Activated naive CD4-positive, alpha-beta T cell treated with anti-CD3 and anti-CD28 coated beads, Interleukin-2, amount 10 ng/mL, durations not matched to agents 7 days and 5 days (primary cell): ENCODE measurements at regions of chr7 and their contacts with region 1.

Region 1: DNA sequence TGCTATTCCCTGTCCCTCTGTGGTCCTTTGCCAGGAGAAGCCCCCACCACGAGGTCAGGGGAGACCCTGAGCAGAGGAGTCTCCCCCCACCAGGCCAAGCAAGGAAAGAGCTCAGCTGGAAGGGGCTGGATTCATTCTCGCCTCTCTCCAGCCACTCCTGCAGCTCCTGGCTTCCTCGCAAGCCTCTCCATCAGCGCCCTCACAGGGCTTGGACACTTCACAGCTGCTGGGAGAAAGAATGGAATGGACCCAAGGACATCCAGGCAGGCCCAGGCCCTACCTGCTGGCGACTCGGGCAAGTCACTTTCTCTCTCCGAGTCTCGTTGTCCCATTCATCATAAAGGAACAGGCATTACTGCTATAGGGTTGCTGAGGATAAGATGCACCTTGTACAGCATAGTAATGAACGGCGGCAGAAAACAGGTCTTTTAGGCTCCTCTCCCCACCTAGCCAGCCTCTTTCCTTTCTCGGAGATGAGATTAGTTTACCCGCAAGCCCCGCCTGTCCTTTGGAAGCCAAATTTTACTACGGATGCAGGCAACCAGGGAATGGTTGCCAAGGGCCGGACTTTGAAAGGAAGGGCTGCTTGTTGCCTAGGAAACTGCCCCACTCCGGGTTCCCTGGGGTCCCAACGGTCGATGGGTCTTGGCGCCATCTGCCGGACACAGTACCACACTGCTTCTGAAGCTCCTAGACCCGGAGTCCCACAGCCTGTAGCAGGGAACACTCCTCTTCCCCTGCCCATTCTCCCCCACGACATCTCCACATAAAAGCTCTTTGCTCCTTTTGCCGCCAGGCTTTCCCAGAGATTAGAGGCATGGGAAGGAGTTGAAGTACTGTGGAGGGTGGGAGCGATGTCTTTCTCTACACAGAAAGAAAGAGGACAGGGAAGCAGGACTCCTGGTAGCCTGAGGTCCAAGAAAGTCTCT is 22.3 kb downstream of the IMPDH1 start:
- DNase-seq: peak; percentile 78
- H3K4me3 Mint-ChIP-seq: no peak overlapping the region
- H3K27ac Mint-ChIP-seq: no peak overlapping the region
- H3K4me1 Mint-ChIP-seq: no peaks in the 10 kb centered on the region
- H3K27me3 Mint-ChIP-seq: peaks cover 42% of the 10 kb centered on the region

Region 2: GRCh38 chr7:128343554-128344430 is 43.7 kb before region 1 on chr7 and contains the start of gene RBM28:
- CTCF ChIA-PET with region 1: interaction called, 183 read pairs
- DNase-seq: peak; percentile 90
- H3K4me3 Mint-ChIP-seq: peak within 1 kb of the TSS; percentile 88
- H3K27ac Mint-ChIP-seq: peak within 1 kb of the TSS; percentile 92
- H3K4me1 Mint-ChIP-seq: peaks cover 26% of the 10 kb centered on the region
- H3K27me3 Mint-ChIP-seq: peaks cover 11% of the 10 kb centered on the region

Region 3: DNA sequence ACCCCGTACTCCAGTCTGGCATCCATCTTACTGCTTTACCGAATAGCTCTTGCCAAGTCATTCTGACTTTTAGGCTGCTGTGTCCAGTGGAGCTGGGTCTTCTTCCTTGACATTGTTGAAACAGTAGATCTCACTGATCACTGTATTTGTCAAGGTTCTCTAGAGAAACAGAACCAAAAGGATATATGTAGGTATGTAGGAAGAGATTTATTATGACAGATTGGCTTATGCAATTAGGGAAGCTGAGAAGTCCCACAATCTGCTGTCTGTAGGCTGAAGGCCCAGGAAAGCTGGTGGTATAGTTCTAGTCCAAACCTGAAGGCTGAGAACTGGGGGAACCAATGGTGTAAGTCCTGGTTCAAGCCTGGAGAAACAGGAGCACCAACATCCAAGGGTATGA is 13.9 kb before region 1 on chr7:
- CTCF ChIA-PET with region 1: interaction called, 48 read pairs
- DNase-seq: no peak
- H3K4me3 Mint-ChIP-seq: no peak overlapping the region
- H3K27ac Mint-ChIP-seq: no peak overlapping the region
- H3K4me1 Mint-ChIP-seq: no peaks in the 10 kb centered on the region
- H3K27me3 Mint-ChIP-seq: peaks cover 17% of the 10 kb centered on the region

Region 4: GRCh38 chr7:128398016-128398840 is 10.7 kb after region 1 on chr7:
- CTCF ChIA-PET with region 1: interaction called, 15 read pairs
- DNase-seq: peak; percentile 62
- H3K4me3 Mint-ChIP-seq: no peak overlapping the region
- H3K27ac Mint-ChIP-seq: no peak overlapping the region
- H3K4me1 Mint-ChIP-seq: peaks cover 6% of the 10 kb centered on the region
- H3K27me3 Mint-ChIP-seq: no peaks in the 10 kb centered on the region

Region 5: DNA sequence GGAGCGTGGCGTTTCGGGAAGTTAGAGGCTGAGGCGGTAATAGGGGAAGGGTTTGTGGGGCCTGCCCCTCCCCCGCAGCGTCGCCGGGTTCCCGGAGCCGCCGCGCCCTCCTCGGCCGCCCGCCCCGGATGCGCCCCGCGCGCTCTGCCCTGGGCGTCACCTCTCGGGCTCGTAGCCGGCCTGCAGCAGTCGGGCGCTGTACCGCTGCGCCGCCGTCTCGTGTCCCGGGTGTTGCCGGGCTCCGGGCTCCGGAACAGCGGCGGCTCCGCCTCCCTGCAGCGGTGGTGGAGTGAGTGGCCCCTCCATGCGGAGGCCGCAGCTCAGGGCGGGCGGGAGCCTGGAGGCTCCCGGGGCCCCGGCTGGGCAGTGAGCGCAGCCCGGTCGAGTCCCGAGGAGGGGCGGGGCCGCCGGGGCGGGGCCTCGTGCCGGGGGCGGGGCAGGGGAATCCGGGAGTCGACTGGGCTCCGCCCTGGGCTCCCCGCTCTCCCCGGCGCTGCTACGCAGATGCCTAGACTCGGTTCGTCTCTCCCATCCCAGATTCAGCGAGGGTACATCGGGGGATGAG is 22.2 kb after region 1 on chr7 and contains the start of gene IMPDH1:
- CTCF ChIA-PET with region 1: interaction called, 15 read pairs
- DNase-seq: peak; percentile 91
- H3K4me3 Mint-ChIP-seq: peak within 1 kb of the TSS; percentile 91
- H3K27ac Mint-ChIP-seq: peak within 1 kb of the TSS; percentile 84
- H3K4me1 Mint-ChIP-seq: peaks cover 41% of the 10 kb centered on the region
- H3K27me3 Mint-ChIP-seq: peaks cover 67% of the 10 kb centered on the region

Region 6: DNA sequence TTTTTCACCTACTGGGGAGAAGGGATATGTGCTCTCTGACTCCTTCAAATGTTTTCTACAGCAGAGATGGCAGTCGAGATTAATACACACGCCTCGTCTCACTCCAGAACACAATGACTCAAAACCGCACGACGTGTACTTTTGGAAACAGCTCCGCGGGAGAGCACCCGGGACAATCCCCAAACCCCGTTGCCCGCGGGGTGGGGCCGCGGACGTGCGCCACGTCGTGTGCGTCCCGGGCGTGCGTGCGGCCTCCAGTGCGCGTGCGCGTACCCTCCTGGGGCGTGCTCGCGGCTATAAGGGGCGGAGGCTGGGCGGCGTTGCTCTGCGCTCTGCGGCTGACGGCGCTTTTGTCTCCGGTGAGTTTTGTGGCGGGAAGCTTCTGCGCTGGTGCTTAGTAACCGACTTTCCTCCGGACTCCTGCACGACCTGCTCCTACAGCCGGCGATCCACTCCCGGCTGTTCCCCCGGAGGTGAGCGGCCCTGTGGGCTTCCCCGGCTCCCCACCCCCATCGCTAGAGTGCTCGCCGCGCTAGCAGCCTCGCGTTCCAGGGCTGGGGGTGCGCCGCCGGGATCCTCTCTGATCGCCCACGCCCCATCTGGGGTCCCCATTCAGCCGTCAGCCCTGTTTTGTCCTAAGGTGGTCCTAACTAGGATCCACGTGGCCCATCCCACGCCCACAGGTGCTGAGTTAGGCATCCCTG is 68.2 kb after region 1 on chr7 and contains the start of gene HILPDA:
- CTCF ChIA-PET with region 1: interaction called, 17 read pairs
- DNase-seq: peak; percentile 95
- H3K4me3 Mint-ChIP-seq: peak within 1 kb of the TSS; percentile 88
- H3K27ac Mint-ChIP-seq: peak within 1 kb of the TSS; percentile 96
- H3K4me1 Mint-ChIP-seq: peaks cover 57% of the 10 kb centered on the region
- H3K27me3 Mint-ChIP-seq: peaks cover 35% of the 10 kb centered on the region

Region 7: DNA sequence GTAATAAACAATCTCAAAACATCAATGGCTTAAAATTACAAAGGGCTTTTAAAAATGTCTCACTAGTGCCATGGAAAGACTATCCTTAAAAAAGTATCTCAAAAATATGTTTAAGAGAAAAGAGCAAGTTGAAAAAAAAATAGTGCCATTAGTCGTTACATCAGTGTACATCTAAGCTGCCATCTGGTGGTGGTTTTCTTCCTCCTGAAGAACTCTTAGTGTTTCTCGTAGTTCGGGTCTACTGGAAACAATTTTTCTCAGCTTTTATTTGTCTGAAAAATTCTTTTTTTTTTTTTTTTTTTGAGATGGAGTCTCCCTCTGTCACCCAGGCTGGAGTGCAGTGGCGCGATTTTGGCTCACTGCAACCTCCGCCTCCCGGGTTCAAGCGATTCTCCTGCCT is 278.7 kb after region 1 on chr7:
- CTCF ChIA-PET with region 1: no interaction called
- DNase-seq: no peak
- H3K4me3 Mint-ChIP-seq: no peak overlapping the region
- H3K27ac Mint-ChIP-seq: no peak overlapping the region
- H3K4me1 Mint-ChIP-seq: no peaks in the 10 kb centered on the region
- H3K27me3 Mint-ChIP-seq: no peaks in the 10 kb centered on the region